ENCODE measurements at regions of chr11 and their contacts with region 1.

Region 1: DNA sequence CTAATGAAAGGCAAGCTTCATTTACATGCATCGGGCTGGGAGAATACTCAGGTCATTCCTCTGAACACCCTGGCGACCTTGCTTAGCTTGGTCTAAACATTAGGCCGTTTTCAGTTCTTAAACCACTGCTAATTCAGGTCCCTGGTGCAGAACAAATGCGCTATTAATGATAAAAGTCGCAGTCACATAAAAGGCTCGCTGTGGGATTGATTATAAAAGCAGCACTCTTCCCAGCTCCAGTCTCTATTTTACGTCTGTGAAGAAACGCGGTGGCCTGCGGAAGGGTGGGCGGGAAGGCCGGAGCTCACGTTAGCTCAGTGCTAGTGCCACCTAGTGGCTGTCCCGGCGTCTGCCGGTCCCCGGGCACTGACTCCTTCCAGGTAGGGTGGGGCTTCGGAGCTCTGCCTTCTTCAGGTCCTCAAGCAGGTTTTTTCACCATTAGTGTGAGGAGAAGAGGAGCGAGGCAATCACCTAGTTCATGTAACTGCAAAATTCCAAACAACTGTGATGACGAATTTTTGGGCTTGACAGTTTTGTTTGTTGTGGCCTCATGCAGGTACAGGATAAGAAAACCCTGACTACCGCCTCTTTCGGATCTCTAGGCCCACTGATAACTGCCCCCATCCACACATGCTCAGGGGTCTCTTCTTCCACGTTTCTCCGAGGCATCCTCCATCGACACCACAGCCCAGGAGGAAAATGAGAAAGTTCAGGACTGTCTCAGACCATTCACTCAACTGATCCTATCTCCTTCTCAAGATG is 66.5 kb upstream of the CLMP start:
- DNase-seq: peak; percentile 73
- H3K4me3 Mint-ChIP-seq: no peak overlapping the region
- H3K27ac Mint-ChIP-seq: no peak overlapping the region
- H3K4me1 Mint-ChIP-seq: peaks cover 17% of the 10 kb centered on the region
- H3K27me3 Mint-ChIP-seq: peaks cover 27% of the 10 kb centered on the region

Region 2: GRCh38 chr11:123110356-123110755 is 151.2 kb before region 1 on chr11:
- CTCF ChIA-PET with region 1: interaction called, 24 read pairs
- POLR2A ChIA-PET with region 1: no interaction called
- DNase-seq: no peak
- H3K4me3 Mint-ChIP-seq: no peak overlapping the region
- H3K27ac Mint-ChIP-seq: no peak overlapping the region
- H3K4me1 Mint-ChIP-seq: peaks cover 6% of the 10 kb centered on the region
- H3K27me3 Mint-ChIP-seq: peaks cover 9% of the 10 kb centered on the region

Region 3: GRCh38 chr11:123166071-123166559 is 95.4 kb before region 1 on chr11:
- CTCF ChIA-PET with region 1: interaction called, 10 read pairs
- POLR2A ChIA-PET with region 1: no interaction called
- DNase-seq: peak; percentile 30
- H3K4me3 Mint-ChIP-seq: no peak overlapping the region
- H3K27ac Mint-ChIP-seq: no peak overlapping the region
- H3K4me1 Mint-ChIP-seq: no peaks in the 10 kb centered on the region
- H3K27me3 Mint-ChIP-seq: peaks cover 2% of the 10 kb centered on the region

Region 4: DNA sequence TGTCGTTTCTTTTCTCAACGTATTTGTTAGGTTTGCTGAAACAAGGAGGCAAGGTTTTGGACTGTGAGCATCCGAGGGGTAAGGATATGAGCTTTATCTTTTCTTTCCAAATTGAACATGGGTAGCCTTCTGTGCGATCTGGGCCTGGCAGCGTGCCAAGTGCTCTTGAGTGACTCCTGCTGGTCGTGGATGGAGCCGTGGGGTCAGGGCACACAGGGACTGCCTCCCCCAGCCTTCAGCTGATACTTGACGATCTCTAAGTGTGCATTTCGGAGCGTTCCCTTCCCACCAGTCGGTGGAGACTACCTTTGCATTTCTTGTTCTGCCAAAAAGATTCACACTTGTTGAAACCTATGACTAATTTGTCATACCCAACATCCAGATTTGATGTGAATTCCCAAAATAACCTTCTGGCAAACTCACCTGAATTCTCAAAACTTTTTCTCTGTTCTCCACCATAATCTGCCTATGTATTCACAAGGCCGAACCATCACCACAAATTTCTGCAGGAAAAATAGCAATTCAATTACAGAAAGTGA is 26.3 kb before region 1 on chr11:
- CTCF ChIA-PET with region 1: interaction called, 17 read pairs
- POLR2A ChIA-PET with region 1: no interaction called
- DNase-seq: peak; percentile 40
- H3K4me3 Mint-ChIP-seq: no peak overlapping the region
- H3K27ac Mint-ChIP-seq: no peak overlapping the region
- H3K4me1 Mint-ChIP-seq: peaks cover 35% of the 10 kb centered on the region
- H3K27me3 Mint-ChIP-seq: peaks cover 11% of the 10 kb centered on the region

Region 5: DNA sequence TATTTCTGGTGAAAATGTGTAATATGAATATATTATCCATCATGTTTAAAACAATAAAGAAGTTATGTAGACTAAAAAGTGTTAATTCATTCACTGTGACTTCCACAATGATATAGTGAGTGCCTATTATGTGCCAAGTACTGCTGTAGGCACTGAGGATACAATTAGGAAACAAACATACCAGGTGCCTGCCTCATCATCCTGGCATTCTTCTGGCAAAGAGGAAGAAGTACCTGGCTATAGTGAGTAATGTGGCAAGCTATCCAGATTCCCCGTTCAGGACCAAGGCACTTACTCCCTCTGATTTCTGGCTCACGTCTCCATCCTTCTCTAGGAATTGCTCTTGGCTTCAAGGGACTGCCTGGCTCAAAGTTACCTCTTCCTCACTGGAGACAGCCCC is 11.0 kb after region 1 on chr11:
- CTCF ChIA-PET with region 1: interaction called, 12 read pairs
- POLR2A ChIA-PET with region 1: no interaction called
- DNase-seq: no peak
- H3K4me3 Mint-ChIP-seq: no peak overlapping the region
- H3K27ac Mint-ChIP-seq: no peak overlapping the region
- H3K4me1 Mint-ChIP-seq: peaks cover 3% of the 10 kb centered on the region
- H3K27me3 Mint-ChIP-seq: peaks cover 14% of the 10 kb centered on the region

Region 6: DNA sequence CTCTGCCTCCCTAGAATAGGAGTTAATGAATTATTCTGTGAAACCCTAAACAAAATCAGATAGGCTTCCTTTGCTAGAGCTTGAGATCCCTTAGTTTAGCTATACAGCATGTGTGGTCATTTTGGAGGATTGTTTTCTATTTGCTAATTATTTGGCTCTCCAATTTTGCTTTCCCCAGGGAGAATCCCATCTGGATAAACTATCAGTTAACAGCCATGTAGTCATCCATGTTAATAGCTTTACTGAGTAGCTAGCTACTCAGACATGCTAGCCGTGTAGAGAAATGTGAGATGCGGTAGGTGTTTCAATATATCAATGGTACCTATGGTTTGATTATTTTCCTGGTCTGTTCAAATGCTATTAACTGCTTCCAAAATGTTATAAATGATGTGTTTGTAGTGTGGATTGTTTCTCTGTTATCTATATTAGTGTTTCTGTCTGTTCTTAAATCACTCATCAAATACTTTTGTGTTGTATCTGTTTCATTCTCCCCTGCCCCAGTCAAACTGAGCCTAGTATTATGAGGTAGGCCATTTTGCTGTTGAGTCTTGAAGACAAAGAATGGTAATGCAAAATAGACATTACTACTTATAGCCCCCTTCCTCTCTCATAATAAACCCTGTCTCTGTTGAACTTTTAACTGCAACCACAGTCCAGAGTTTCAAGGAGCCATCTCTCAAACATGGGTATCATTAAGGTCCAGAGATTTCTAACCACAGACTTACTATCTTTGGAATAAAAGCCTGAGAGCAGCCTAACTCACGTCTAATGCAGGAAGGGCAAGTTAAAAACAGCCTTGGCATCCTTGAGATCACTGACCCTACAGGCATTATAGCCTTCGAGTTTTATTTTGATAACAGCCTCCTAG is 112.5 kb after region 1 on chr11:
- CTCF ChIA-PET with region 1: no interaction called
- POLR2A ChIA-PET with region 1: no interaction called
- DNase-seq: no peak
- H3K4me3 Mint-ChIP-seq: no peak overlapping the region
- H3K27ac Mint-ChIP-seq: no peak overlapping the region
- H3K4me1 Mint-ChIP-seq: peaks cover 45% of the 10 kb centered on the region
- H3K27me3 Mint-ChIP-seq: no peaks in the 10 kb centered on the region

Region 7: DNA sequence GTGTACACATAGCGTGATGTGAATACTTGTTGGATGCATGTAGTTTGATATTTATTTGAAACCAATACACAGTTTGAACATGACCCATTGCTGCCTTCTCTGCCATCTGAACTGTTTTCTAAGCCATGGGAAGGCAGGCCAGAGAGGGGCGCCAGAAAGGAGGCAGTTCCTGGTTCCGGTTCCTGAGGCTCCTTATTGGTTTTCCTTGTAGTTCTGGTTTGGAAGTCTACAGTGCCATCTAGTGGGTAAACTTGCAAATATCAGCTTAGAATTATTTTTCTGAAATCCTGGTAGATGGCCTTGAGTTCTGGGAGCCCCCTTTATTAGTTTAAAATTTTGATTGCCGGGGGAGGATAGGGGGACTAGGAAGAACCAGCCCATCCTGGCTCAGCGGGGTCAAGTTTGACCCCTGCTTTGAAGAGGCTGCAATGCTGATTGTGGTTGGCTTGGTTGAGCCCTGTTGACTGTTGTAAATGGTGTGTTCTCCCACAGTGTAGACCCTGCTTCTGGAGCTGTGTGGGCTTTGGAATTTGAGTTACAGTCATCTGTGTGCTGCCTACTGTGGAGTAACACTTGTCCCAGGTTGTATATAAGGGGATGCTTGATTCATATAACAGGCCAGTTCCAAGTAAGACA is 216.9 kb after region 1 on chr11:
- CTCF ChIA-PET with region 1: interaction called, 11 read pairs
- POLR2A ChIA-PET with region 1: no interaction called
- DNase-seq: peak; percentile 39
- H3K4me3 Mint-ChIP-seq: peak overlapping the region; percentile 29
- H3K27ac Mint-ChIP-seq: peak overlapping the region; percentile 69
- H3K4me1 Mint-ChIP-seq: peaks cover 67% of the 10 kb centered on the region
- H3K27me3 Mint-ChIP-seq: no peaks in the 10 kb centered on the region